ENCODE measurements at regions of chr6 and their contacts with region 1.

Region 1: DNA sequence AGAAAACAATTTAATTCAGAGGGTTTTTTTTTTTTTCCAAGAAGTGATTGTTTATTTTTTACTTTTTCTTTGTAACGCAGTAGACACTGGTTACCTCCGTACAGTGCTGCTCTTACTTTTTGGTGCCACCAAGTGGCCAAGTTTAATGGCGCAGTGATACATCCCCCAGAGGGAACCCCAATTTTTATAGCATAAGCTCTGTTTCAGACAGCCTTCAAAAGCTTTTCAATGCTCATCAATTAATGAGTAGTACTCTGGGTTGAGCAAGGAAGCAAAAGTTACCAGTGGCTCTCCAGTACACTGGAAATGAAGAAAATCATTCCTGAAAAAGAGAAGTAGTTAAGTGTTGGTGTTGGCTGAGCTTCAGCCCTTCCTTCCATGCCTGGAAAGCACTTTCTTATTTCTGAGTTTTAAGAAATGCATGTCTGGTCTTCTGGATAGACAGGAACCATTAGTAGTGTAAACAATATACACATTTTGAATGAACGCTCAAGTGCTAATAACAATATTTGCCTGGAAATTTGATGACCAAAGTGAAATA is 129.1 kb upstream of the SMLR1 start:
- DNase-seq: peak; percentile 36
- H3K4me3 ChIP-seq: no peak overlapping the region
- H3K27ac ChIP-seq: no peak overlapping the region
- H3K27me3 ChIP-seq: no peaks in the 10 kb centered on the region
- CTCF ChIP-seq: peak; percentile 93

Region 2: GRCh38 chr6:130307752-130308361 is 390.2 kb before region 1 on chr6:
- CTCF ChIA-PET with region 1: interaction called, 13 read pairs
- POLR2A ChIA-PET with region 1: interaction called, 6 read pairs
- DNase-seq: peak; percentile 69
- H3K4me3 ChIP-seq: no peak overlapping the region
- H3K27ac ChIP-seq: no peak overlapping the region
- H3K27me3 ChIP-seq: no peaks in the 10 kb centered on the region
- CTCF ChIP-seq: no peak

Region 3: DNA sequence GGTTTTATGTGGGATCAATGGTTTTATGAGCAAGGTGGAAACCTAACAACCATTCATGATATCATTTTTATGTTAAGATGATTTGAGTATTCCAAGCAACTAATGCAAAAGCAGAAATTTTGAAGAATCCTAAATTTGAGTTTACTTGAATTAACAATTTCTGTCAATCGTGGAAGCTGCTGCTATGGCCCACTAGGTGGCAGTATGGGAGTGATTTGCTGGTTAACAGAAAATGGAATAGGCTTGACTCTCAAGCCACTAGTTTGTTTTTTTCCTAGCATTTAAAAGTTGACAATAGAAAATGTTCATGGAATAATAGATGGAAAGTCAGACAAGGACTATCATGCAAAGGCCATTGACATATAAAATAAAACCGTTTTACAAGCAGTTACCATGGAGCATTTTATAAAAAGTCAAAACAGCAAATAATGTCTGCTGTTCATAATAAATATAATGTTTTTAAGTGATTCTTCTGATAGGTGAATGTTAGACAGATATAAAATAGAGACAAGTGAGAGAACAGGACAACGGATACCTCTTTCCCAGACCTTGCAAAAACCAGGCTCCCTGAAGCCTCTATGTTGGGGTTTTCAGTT is 375.3 kb before region 1 on chr6:
- CTCF ChIA-PET with region 1: interaction called, 93 read pairs
- POLR2A ChIA-PET with region 1: no interaction called
- DNase-seq: peak; percentile 52
- H3K4me3 ChIP-seq: no peak overlapping the region
- H3K27ac ChIP-seq: no peak overlapping the region
- H3K27me3 ChIP-seq: no peaks in the 10 kb centered on the region
- CTCF ChIP-seq: peak; percentile 94

Region 4: GRCh38 chr6:130365166-130366106 is 332.6 kb before region 1 on chr6 and contains the start of gene TMEM200A:
- CTCF ChIA-PET with region 1: interaction called, 26 read pairs
- POLR2A ChIA-PET with region 1: interaction called, 5 read pairs
- DNase-seq: peak; percentile 48
- H3K4me3 ChIP-seq: peak within 1 kb of the TSS; percentile 88
- H3K27ac ChIP-seq: peak within 1 kb of the TSS; percentile 82
- H3K27me3 ChIP-seq: no peaks in the 10 kb centered on the region
- CTCF ChIP-seq: peak; percentile 90
- polyA plus RNA-seq, gene TMEM200A: 29.0 and 34.5 TPM in 2 replicates

Region 5: GRCh38 chr6:131001111-131001736 is 303.2 kb after region 1 on chr6:
- CTCF ChIA-PET with region 1: no interaction called
- POLR2A ChIA-PET with region 1: no interaction called
- DNase-seq: no peak
- H3K4me3 ChIP-seq: no peak overlapping the region
- H3K27ac ChIP-seq: no peak overlapping the region
- H3K27me3 ChIP-seq: no peaks in the 10 kb centered on the region
- CTCF ChIP-seq: no peak